Right ventricle myocardium inferior (tissue), 1 donor: ENCODE measurements at regions of chr22 and their contacts with region 1.

Region 1: DNA sequence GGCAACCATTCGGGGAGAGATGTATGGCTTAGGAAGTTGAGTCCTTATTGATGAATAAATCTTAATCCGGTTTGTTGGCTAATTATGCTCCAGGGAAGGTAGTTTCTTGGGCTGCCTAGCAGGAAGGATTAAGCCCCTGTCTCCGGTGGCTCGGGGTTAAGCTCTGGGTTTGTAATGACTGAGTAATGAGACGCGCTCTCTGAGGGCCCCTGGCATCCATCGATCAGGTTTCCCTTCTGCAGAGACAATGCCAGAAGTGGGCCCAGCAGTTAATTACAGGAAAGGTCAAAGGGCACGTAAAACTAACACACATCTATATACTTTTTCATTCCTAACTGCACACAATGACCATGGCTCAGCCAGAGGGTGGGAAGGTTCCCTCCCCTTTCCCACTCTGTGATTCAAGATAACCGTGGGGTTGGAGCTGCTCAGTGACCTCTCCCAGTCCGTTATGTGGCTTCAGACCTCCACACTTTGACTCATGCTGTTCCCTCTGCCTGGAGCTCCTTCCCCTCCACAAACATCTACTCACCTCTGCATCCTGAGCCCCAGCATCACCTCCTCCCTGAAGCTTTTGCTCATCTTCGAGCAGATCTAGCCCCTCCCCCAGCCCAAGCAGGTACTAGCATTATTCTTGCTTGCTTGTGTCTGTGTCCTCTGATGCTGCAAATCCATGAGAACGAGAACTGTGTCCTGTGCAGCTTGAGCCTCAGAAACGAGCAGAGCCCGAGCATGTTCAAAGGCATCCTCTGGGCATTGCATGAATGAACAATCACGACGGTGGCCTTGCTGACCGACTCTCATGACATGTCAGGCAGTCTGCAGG is 16.6 kb downstream of the SCUBE1 start:
- DNase-seq: no peak
- ATAC-seq: no peak

Region 2: DNA sequence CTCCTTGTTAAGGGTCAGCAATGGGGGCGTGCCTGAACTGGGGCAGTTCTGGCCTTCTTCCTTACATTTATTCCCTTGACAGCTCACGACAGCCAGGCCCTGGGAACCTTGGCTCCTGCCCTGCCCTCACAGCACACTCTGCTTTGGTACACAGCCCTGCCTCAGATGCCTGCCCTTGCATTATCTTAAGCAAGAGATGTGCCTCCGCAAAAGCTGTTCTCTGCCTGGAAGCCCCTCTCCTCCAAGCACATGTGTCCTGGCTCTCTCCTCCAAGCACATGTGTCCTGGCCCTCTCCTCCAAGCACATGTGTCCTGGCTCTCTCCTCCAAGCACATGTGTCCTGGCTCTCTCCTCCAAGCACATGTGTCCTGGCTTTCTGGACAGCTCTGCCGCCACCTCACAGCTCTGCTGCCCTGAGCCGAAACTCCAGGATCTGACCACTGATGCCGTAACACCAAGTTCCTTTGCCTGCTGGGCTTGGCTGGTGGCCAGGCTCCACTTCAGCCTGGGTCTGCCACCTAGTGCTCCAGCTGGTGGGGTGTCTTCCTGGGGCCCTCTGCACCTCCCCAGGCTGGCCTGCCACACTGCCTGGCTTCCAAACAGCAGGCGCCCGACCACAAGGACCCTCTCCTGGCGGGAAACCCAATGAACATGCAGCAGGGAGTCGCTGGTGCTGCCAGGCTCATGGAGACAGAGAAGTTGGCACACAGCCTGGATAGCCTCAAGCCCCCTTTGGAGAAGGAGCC is 36.4 kb before region 1 on chr22:
- intact Hi-C with region 1: loop called (anchors 5 kb)
- DNase-seq: no peak
- ATAC-seq: peak; percentile 59

Region 3: GRCh38 chr22:43313890-43314474 is 12.6 kb before region 1 on chr22:
- intact Hi-C with region 1: loop called (anchors 2 kb)
- DNase-seq: peak; percentile 30
- ATAC-seq: no peak

Region 4: DNA sequence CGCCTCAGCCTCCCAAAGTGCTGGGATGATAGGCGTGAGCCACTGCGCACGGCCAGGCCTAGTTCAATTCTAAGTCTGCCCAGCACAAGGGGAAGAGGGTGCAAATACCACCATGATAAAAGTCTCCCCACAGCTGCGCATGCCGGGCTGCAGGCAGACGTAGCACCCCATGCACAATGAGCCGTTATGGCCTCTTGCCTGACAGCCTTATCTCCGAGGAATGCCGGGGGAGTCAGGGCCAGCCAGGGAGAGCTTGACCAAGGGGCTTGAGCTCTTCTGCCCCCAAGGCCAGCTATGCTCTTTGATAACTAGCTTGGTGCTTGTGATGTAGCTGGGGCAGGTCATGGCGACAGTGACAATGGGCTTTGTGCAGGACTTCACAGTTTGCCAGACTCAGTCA is 30.3 kb after region 1 on chr22:
- intact Hi-C with region 1: no loop called
- DNase-seq: no peak
- ATAC-seq: no peak